Activated CD4-positive, alpha-beta memory T cell treated with anti-CD3 and anti-CD28 coated beads for 36 hours (primary cell): ENCODE measurements at regions of chr1 and their contacts with region 1.

Region 1: GRCh38 chr1:186272486-186272885 is 102.6 kb downstream of the TPR start:
- DNase-seq: no peak
- H3K4me3 Mint-ChIP-seq: no peak overlapping the region
- H3K27ac Mint-ChIP-seq: no peak overlapping the region
- H3K4me1 Mint-ChIP-seq: peaks cover 4% of the 10 kb centered on the region
- H3K27me3 Mint-ChIP-seq: no peaks in the 10 kb centered on the region

Region 2: DNA sequence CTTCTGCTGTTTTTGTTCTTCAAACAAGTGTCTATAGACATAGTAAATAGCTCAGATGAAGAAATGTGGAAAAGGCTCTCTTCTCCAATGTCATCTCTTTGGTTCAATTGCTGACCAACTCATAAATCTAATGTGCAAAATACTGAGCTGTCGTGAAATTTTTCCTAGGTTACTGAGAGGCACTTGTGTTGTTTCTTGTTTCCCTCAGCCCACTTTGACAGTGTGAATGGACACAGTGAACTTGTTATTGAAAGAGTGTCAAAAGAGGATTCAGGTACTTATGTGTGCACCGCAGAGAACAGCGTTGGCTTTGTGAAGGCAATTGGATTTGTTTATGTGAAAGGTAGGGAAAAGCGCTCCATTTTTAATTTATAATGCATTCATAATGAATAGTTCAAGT is 142.7 kb before region 1 on chr1:
- CTCF ChIA-PET with region 1: no interaction called
- POLR2A ChIA-PET with region 1: no interaction called
- intact Hi-C with region 1: no loop called
- DNase-seq: no peak
- H3K4me3 Mint-ChIP-seq: no peak overlapping the region
- H3K27ac Mint-ChIP-seq: no peak overlapping the region
- H3K4me1 Mint-ChIP-seq: no peaks in the 10 kb centered on the region
- H3K27me3 Mint-ChIP-seq: no peaks in the 10 kb centered on the region

Region 3: DNA sequence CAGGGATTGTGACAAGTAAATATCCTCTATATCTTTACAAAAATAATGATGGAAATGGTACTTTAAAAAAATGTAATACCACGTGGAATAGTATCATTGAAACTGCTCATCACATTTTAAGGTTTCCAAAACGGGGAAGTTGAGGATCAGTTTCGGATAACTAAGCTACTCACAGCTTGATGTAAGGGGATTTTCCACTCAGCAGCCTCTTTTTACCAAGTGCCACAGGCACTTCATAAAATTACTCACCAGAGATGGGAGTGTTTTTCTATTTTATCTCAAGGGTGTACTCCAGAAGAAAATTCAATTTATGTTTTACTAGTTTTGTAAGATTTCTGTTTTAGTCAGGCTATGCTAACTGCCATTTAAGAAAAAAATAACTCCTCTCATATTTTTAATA is 10.9 kb after region 1 on chr1:
- CTCF ChIA-PET with region 1: no interaction called
- POLR2A ChIA-PET with region 1: no interaction called
- intact Hi-C with region 1: loop called (anchors 1 kb)
- DNase-seq: no peak
- H3K4me3 Mint-ChIP-seq: no peak overlapping the region
- H3K27ac Mint-ChIP-seq: peak overlapping the region; percentile 54
- H3K4me1 Mint-ChIP-seq: peaks cover 34% of the 10 kb centered on the region
- H3K27me3 Mint-ChIP-seq: no peaks in the 10 kb centered on the region

Region 4: DNA sequence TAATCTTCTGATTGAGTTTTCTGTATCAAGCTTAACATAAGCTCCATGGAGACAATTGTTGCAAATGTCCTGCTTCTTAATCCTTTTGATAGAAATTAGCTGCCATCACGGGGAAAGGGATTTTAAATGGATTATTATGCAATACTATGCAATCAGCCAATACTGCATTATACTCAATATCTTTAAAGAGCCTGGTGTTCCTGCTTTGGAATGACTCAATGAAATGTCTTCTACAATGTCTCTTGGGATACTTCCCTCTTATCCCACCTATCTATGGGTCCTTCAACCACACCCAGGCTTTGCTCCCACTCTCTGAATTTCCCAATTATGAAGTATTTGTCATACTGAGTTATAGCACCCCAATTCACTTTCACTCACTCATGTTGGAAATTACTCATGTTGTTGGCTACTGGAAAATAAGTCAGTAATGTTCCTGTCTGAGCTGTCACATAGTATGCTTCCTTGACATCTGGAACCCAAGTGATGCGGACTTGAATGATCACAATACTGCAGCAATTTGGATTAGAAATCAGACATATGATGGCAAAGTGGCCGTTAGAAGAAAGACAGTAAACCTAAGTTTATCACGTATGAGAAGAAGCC is 17.6 kb after region 1 on chr1:
- CTCF ChIA-PET with region 1: interaction called, 3 read pairs
- POLR2A ChIA-PET with region 1: no interaction called
- intact Hi-C with region 1: loop called (anchors 2 kb)
- DNase-seq: no peak
- H3K4me3 Mint-ChIP-seq: peak overlapping the region; percentile 24
- H3K27ac Mint-ChIP-seq: peak overlapping the region; percentile 92
- H3K4me1 Mint-ChIP-seq: peaks cover 65% of the 10 kb centered on the region
- H3K27me3 Mint-ChIP-seq: peaks cover 2% of the 10 kb centered on the region

Region 5: GRCh38 chr1:186325239-186325638 is 52.8 kb after region 1 on chr1:
- CTCF ChIA-PET with region 1: interaction called, 4 read pairs
- POLR2A ChIA-PET with region 1: no interaction called
- intact Hi-C with region 1: loop called (anchors 1 kb)
- DNase-seq: no peak
- H3K4me3 Mint-ChIP-seq: no peak overlapping the region
- H3K27ac Mint-ChIP-seq: no peak overlapping the region
- H3K4me1 Mint-ChIP-seq: peaks cover 5% of the 10 kb centered on the region
- H3K27me3 Mint-ChIP-seq: no peaks in the 10 kb centered on the region